Activated naive CD8-positive, alpha-beta T cell treated with anti-CD3 and anti-CD28 coated beads, Interleukin-2, amount 10 ng/mL, durations not matched to agents 7 days and 5 days (primary cell): ENCODE measurements at regions of chr7 and their contacts with region 1.

Region 1: DNA sequence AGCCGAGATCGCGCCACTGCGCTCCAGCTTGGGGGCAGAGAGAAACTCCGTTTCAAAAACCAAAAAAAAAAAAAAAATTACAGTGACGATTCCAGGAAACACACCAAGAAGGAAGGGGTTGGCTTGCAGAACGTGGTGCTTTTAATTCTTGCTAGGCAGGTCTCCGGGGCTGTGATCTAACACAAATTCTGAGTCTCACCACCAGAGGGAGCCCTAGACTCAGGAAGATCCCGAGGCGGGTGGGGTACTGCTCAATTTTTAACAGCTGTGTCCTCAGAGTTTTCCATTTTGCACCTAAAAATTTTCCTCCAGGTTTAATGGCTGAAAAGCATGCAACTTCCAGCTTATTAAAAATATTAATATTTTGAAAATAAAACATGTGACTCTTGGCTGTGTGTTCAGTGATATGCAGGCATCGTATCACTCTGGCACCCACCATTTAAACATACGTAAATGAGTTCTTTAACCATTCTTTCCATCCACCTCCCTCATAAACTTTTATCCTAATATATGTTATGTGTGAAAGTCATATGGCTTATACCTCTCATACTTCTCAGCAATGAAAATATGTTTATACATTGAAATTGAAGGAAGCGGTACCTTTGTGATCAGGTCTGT is 26.5 kb upstream of the NUB1 start:
- DNase-seq: peak; percentile 60
- ATAC-seq: peak; percentile 95
- H3K4me3 Mint-ChIP-seq: peak overlapping the region; percentile 69
- H3K27ac Mint-ChIP-seq: peak overlapping the region; percentile 80
- H3K4me1 Mint-ChIP-seq: peaks cover 18% of the 10 kb centered on the region
- H3K27me3 Mint-ChIP-seq: peaks cover 1% of the 10 kb centered on the region

Region 2: GRCh38 chr7:151341357-151342101 is 26.4 kb after region 1 on chr7 and contains the start of gene NUB1:
- POLR2A ChIA-PET with region 1: interaction called, 17 read pairs
- DNase-seq: peak; percentile 99
- ATAC-seq: peak; percentile 68
- H3K4me3 Mint-ChIP-seq: peak within 1 kb of the TSS; percentile 87
- H3K27ac Mint-ChIP-seq: peak within 1 kb of the TSS; percentile 99
- H3K4me1 Mint-ChIP-seq: peaks cover 20% of the 10 kb centered on the region
- H3K27me3 Mint-ChIP-seq: no peaks in the 10 kb centered on the region
- total RNA-seq, gene NUB1: 84.8 to 91.8 TPM

Region 3: DNA sequence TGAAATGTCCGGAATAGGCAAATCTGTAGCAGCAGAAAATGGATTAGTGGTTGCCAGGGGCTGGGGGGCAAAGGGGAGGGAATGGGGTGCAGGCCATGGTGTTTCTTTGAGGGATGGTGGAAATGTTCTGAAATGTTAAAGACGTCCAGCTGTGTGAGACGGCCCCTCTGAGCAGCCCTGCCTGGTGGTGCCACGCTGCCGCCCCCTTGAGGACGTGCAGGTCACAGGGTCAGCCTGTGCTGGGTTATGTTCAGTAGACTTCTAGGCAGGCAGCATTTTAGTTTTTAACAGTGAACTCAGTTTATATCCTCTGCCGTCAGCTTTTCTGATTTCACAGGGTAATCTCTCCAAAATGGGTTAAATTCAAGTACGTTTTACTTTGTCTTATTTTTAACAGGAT is 35.9 kb after region 1 on chr7:
- POLR2A ChIA-PET with region 1: interaction called, 24 read pairs
- DNase-seq: peak; percentile 57
- ATAC-seq: no peak
- H3K4me3 Mint-ChIP-seq: peak overlapping the region; percentile 72
- H3K27ac Mint-ChIP-seq: peak overlapping the region; percentile 91
- H3K4me1 Mint-ChIP-seq: peaks cover 37% of the 10 kb centered on the region
- H3K27me3 Mint-ChIP-seq: no peaks in the 10 kb centered on the region

Region 4: GRCh38 chr7:151448261-151449252 is 133.4 kb after region 1 on chr7:
- POLR2A ChIA-PET with region 1: interaction called, 11 read pairs
- DNase-seq: peak; percentile 86
- ATAC-seq: peak; percentile 92
- H3K4me3 Mint-ChIP-seq: peak overlapping the region; percentile 66
- H3K27ac Mint-ChIP-seq: peak overlapping the region; percentile 75
- H3K4me1 Mint-ChIP-seq: peaks cover 14% of the 10 kb centered on the region
- H3K27me3 Mint-ChIP-seq: peaks cover 7% of the 10 kb centered on the region